ENCODE measurements at regions of chr10 and their contacts with region 1.

Region 1: DNA sequence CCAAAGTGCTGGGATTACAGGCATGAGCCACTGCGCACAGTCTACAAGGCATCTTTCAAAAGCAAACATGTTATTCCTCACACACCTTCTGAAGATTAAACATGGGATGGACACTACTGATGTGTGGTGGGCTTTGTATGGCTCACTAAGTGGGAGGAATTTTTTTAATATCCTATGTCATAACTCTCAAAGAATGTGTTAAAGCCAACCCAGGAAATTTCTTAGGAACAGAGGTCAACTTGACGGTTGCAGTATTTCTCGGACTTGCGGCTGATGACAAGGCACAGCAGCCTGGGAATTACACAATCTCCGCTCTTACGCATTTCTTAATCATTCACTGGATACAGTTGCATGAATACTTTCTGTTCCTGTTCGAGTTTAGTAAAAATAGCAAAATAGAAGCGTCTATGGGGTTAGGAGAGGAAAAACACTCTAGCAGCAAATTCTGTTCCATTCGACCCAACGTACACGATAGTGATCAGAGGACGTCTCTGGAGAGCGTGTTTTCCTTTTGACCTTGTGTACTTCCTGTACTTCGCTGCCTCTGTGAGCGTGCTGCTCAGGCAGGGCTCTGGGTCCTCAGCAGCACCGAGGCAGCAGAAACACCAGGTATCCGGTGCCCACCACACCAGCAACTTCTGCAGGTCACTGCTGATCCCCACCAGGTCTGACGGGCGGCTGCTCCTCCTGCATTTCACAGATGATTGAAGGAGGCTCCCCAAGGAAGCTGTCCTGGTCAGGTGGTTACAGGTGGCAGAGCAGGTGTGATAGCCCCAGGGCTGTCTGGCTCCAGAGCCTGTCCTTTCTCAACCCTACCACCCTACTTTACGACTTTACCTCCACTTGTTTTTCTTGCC is 26.4 kb upstream of the SRGN start:
- DNase-seq: peak; percentile 35
- ATAC-seq: peak; percentile 35
- H3K4me3 Mint-ChIP-seq: peak overlapping the region; percentile 53
- H3K27ac Mint-ChIP-seq: peak overlapping the region; percentile 81
- H3K4me1 Mint-ChIP-seq: peaks cover 51% of the 10 kb centered on the region
- H3K27me3 Mint-ChIP-seq: no peaks in the 10 kb centered on the region
- CTCF ChIP-seq: no peak

Region 2: GRCh38 chr10:68938119-68938518 is 123.4 kb before region 1 on chr10:
- CTCF ChIA-PET with region 1: no interaction called
- POLR2A ChIA-PET with region 1: no interaction called
- intact Hi-C with region 1: no loop called
- DNase-seq: no peak
- ATAC-seq: no peak
- H3K4me3 Mint-ChIP-seq: no peak overlapping the region
- H3K27ac Mint-ChIP-seq: peak overlapping the region; percentile 58
- H3K4me1 Mint-ChIP-seq: peaks cover 9% of the 10 kb centered on the region
- H3K27me3 Mint-ChIP-seq: no peaks in the 10 kb centered on the region
- CTCF ChIP-seq: no peak

Region 3: GRCh38 chr10:69022611-69023010 is 38.9 kb before region 1 on chr10:
- CTCF ChIA-PET with region 1: no interaction called
- POLR2A ChIA-PET with region 1: no interaction called
- intact Hi-C with region 1: no loop called
- DNase-seq: no peak
- ATAC-seq: no peak
- H3K4me3 Mint-ChIP-seq: no peak overlapping the region
- H3K27ac Mint-ChIP-seq: no peak overlapping the region
- H3K4me1 Mint-ChIP-seq: peaks cover 6% of the 10 kb centered on the region
- H3K27me3 Mint-ChIP-seq: no peaks in the 10 kb centered on the region
- CTCF ChIP-seq: no peak

Region 4: GRCh38 chr10:69045441-69046300 is 15.9 kb before region 1 on chr10:
- CTCF ChIA-PET with region 1: interaction called, 25 read pairs
- POLR2A ChIA-PET with region 1: interaction called, 14 read pairs
- intact Hi-C with region 1: no loop called
- DNase-seq: peak; percentile 56
- ATAC-seq: peak; percentile 75
- H3K4me3 Mint-ChIP-seq: peak overlapping the region; percentile 42
- H3K27ac Mint-ChIP-seq: peak overlapping the region; percentile 94
- H3K4me1 Mint-ChIP-seq: peaks cover 40% of the 10 kb centered on the region
- H3K27me3 Mint-ChIP-seq: no peaks in the 10 kb centered on the region
- CTCF ChIP-seq: no peak